ENCODE measurements at regions of chr13 and their contacts with region 1.

Region 1: GRCh38 chr13:39527961-39528660 is 74.9 kb downstream of the LHFPL6 start:
- DNase-seq: peak; percentile 78
- H3K4me3 ChIP-seq: no peak overlapping the region
- CTCF ChIP-seq: no peak

Region 2: DNA sequence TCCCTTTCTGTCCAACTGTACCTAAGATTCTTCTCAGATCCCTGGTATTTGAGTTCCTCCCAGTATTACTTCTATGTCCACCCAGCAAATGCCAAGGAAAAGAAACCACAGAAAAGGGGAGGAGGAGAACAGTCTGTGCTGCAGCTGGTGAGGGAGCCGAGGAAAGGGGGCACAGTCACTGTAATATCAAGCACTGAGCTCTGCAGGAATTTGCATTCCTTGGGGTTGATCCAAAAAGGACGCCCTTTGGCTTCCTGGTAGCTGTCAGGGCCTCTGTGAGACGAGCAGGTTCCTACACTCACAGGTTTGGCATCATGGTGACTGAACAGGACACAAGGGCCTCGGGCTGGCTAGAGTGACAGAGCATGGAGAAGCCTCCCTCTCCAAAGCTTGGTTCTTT is 216.5 kb before region 1 on chr13:
- CTCF ChIA-PET with region 1: no interaction called
- POLR2A ChIA-PET with region 1: no interaction called
- DNase-seq: no peak
- H3K4me3 ChIP-seq: no peak overlapping the region
- CTCF ChIP-seq: no peak

Region 3: DNA sequence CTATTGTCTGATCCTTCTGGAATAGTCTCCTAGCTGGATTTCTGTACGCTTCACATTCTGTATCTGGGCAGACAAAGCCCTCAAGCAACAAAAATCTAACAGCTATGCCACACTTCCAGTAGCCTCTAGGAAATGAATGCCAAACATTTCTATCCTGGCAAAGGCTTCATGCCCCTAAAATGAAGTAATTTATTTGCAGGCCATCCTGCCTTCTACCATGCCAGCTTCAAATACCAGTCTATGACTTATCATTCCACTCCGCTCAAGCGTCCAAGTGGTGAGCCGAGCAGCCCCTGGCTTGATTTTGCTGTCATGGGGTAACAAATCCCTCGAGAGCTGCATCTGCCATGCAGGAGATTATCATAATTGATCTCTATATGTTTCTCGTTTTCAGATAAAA is 12.0 kb before region 1 on chr13:
- CTCF ChIA-PET with region 1: interaction called, 12 read pairs
- POLR2A ChIA-PET with region 1: no interaction called
- DNase-seq: no peak
- H3K4me3 ChIP-seq: no peak overlapping the region
- CTCF ChIP-seq: no peak